ENCODE measurements at regions of chr3 and their contacts with region 1.

Region 1: DNA sequence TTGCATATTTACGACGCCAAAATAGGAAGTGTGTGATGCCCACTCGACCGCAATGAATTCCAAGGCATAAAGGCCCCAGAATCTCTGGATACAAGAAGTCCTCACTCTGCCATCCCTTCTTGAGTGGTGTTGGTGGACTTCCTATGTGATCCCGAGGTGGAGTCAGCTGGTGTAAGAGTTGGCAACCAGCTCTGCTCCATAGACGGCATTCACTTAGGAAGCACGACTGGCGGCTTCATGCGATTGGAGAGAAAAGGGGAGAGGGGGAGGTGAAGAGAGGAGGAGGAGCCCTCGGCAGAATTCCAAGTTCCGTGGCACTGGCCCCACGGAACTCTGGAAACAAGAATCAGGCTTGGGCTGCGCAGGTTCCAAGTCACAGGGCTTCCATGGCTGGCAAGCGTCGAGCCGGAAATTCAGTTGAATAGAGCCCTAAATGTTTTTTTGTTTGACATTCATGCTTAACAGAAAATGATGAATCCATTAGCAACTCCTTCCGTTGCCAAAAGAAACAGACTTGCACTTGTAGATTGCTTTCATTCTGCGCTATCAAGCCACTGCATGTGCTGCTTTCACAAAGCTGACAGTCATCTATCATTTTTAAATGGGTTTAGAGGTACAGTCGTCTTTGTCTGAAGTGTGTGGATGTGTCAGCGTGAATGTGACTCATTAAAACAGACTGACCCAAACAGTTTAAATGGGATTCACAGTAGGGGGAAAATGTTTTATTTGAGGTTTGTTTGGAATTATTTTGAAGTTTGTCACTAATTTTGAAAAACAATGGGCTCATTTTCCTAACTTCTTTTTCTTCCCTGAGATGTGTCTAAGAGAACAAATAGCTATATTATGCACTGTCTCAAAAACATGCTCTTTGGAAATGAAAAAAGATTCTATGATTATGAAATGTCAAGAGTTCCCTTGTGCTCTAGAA is 428.3 kb upstream of the ATP11B start:
- DNase-seq: peak; percentile 68
- H3K4me3 ChIP-seq: peak overlapping the region; percentile 21
- CTCF ChIP-seq: no peak

Region 2: DNA sequence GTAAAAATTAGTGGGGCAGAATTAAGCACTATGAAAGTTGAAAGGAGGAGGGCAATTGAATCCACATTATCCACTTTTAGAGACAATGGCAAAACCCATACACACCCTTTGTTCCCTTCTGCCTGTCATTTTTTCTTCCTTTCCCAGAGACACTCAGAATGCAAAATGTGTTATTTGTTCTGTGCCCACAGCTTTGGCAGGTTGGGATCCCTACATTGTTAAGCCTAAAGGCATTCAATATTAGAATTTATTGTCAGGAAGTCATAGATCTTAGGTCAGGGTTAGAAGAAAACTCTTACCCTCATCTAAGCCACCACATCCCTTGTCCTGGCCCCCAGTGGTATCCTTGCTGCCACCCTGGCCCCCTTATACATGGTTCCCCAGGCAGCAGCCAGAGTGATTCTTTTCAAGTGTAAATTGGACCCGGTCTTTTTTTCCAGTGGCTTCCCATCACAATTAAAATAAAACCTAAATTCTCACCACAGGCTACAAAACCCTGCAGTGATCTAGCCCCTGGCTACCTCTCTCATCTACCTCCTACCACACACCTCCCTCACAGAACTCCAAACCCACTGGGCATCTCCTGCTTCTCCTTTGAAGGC is 41.8 kb before region 1 on chr3:
- in situ Hi-C with region 1: no loop called
- DNase-seq: no peak
- H3K4me3 ChIP-seq: no peak overlapping the region
- CTCF ChIP-seq: no peak

Region 3: DNA sequence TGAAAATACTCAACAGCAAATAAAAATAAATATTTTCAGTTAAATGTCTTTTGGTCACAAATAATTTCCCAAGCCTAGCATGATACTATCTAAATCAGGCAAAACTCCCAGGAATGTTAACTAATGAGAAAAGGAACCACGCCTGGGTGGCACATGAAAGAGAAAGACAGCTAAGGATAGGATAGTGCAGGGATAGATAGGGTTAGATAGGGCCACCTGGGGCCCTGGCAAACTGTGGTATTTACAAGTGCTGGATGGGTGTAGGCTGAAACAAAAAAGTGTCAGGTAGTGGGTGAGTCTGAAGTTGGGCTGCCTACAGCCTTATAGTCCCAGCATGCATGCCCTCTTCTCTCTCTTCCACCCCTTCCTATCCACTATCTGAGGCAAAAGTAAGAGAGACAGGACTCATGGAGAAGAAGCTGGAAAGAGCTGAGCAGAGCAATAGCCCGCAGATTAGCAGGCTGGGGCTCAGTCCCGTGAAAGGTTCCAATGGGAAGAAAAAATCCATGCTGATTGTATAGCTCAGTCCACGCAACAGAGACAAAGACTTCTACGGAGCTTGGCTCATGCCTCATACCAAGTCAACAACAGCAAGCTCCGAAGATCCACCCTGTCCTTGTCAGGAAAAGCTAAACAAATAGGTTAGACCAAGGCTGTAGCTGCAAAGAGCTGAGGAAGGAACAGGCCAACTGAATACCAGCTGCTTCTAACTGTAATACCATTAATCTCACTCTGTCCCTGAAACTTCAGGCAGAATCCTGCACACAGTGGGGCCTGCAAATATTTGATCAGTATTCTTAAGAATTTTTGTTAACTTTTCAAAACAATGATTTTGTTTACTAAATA is 86.2 kb after region 1 on chr3:
- in situ Hi-C with region 1: loop called (anchors 5 kb)
- DNase-seq: no peak
- H3K4me3 ChIP-seq: no peak overlapping the region
- CTCF ChIP-seq: no peak